K562 (cell line): ENCODE measurements at regions of chr11 and their contacts with region 1.

Region 1: DNA sequence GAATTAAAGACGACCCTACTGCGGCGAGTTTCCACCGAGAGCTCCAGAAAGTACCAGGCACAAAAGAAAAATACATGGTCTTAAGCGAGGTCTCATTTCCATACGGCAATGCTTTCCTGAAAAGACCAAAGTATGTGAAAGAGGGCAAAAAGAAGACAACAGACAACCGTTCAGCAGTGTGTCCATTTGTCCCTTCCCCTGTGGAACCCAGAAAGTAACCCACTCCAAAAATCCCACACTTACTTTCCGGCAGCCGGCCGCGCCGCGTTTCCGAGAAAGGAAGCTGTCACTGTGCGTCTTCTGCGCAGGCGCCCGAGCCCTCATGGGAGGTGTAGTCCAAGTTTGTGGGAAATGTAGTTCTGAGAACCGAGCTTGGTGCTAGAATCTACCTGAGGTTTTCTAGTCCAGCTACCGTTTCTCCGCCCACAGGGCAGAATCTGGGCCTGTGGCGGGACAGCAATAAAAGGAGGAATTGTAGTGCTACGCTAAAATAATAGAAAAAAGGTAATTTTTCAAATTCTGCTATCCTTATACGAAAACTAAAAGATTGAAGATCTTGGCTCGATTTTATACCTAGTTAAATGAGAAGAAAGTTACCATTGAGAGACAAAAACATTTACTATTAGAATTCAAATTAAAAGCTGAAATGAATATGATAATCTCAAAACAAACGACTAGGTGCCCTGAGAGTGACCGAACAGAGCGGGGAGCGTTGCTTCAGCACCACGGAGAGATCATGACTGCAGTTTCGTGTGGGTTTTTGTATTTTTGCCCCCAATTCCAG is at the start of gene PUS3:
- DNase-seq: peak; percentile 84 to 95 (median 88)
- ATAC-seq: peak; percentile 97
- H3K4me3 ChIP-seq: peak within 1 kb of the TSS; percentile 68
- H3K27ac ChIP-seq: peak within 1 kb of the TSS; percentile 73
- H3K4me1 ChIP-seq: peaks cover 0 to 6% of the 10 kb centered on the region in 2 experiments; a peak in 2 of 5 replicates
- H3K27me3 ChIP-seq: peaks cover 6 to 20% of the 10 kb centered on the region in 2 experiments; a peak in 4 of 5 replicates
- CTCF ChIP-seq: no peak
- EP300 ChIP-seq: no peak
- POLR2A ChIP-seq: peak; percentile 93
- RAD21 ChIP-seq: no peak
- polyA plus RNA-seq, gene PUS3: 39.6 to 49.2 TPM

Region 2: GRCh38 chr11:125887373-125888324 is 15.5 kb before region 1 on chr11 and contains the start of gene HYLS1:
- CTCF ChIA-PET with region 1: no interaction called
- POLR2A ChIA-PET with region 1: interaction called, 10 read pairs
- in situ Hi-C with region 1: no loop called
- intact Hi-C with region 1: no loop called
- DNase-seq: peak; percentile 85 to 94 (median 89)
- ATAC-seq: peak; percentile 96
- H3K4me3 ChIP-seq: peak within 1 kb of the TSS; percentile 62
- H3K27ac ChIP-seq: peak within 1 kb of the TSS; percentile 83
- H3K4me1 ChIP-seq: peaks cover 13 to 31% of the 10 kb centered on the region in 2 experiments
- H3K27me3 ChIP-seq: no peaks in the 10 kb centered on the region
- CTCF ChIP-seq: peak; percentile 29 to 56 (median 31); a peak in 5 of 6 replicates
- EP300 ChIP-seq: no peak
- POLR2A ChIP-seq: peak; percentile 86
- RAD21 ChIP-seq: peak in 1 of 2 experiments; percentile 21; a peak in 1 of 4 replicates
- polyA plus RNA-seq, gene HYLS1: 7.4 to 8.2 TPM

Region 3: DNA sequence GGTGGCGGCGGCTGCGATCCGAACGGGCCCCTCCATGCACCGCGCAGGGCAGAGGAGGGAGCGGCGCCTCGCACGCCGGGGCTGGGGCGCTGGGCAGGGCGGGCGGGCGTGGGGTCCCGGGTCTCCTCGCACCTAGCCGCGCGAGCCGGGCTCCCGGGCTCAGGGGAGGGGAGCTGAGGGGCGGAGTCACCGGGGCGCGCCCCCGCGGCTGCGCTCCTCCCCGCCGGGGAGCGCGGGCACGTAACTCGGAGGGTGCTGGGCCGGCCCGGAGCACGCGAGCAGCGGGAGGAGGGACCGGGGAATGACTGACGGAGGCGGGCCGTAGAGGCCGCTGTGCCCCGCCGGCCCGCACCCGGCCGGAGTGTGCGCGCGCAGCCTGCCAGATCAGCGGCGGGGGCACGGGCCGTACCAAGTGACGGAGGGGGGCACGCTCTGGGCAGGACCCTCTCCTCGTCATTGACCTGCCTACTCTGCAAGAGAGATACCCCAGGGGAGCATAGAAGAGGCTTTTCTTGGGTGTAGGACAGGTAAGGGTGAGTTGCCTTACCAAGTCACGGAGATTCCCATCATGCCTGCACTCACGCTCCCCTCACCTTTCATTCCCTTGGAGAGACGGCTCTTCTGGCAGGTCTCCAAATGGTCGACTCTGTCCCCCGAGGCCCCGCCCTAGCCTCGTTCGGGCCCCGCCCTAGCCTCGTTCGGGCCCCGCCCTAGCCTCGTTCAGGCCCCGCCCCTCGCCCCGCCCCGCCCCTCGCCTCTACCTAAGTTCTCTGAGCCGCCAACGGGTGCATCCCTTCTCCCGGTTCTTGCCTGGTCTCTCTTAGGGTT is 159.8 kb after region 1 on chr11 and contains the start of gene CDON:
- CTCF ChIA-PET with region 1: no interaction called
- POLR2A ChIA-PET with region 1: no interaction called
- in situ Hi-C with region 1: no loop called
- intact Hi-C with region 1: loop called (anchors 1 kb)
- DNase-seq: peak; percentile 92 to 99 (median 99)
- ATAC-seq: peak; percentile 99
- H3K4me3 ChIP-seq: peak within 1 kb of the TSS; percentile 43
- H3K27ac ChIP-seq: peak within 1 kb of the TSS; percentile 91
- H3K4me1 ChIP-seq: peaks cover 0 to 12% of the 10 kb centered on the region in 2 experiments; a peak in 2 of 5 replicates
- H3K27me3 ChIP-seq: peaks cover 8 to 21% of the 10 kb centered on the region in 2 experiments; a peak in 3 of 5 replicates
- CTCF ChIP-seq: 0 out of 6 replicates have a peak, but pooled peaks of 1 of the 3 experiments have one; percentile 22
- EP300 ChIP-seq: no peak
- POLR2A ChIP-seq: no peak
- RAD21 ChIP-seq: no peak
- polyA plus RNA-seq, gene CDON: 0.08 to 0.14 TPM